ENCODE measurements at regions of chr14 and their contacts with region 1.

Region 1: GRCh38 chr14:34227834-34228649 is 234.0 kb downstream of the SPTSSA start:
- DNase-seq: peak; percentile 66
- H3K4me3 ChIP-seq: no peak overlapping the region
- H3K27ac ChIP-seq: no peak overlapping the region
- H3K4me1 ChIP-seq: no peaks in the 10 kb centered on the region
- H3K27me3 ChIP-seq: peaks cover 6% of the 10 kb centered on the region
- CTCF ChIP-seq: peak; percentile 84

Region 2: DNA sequence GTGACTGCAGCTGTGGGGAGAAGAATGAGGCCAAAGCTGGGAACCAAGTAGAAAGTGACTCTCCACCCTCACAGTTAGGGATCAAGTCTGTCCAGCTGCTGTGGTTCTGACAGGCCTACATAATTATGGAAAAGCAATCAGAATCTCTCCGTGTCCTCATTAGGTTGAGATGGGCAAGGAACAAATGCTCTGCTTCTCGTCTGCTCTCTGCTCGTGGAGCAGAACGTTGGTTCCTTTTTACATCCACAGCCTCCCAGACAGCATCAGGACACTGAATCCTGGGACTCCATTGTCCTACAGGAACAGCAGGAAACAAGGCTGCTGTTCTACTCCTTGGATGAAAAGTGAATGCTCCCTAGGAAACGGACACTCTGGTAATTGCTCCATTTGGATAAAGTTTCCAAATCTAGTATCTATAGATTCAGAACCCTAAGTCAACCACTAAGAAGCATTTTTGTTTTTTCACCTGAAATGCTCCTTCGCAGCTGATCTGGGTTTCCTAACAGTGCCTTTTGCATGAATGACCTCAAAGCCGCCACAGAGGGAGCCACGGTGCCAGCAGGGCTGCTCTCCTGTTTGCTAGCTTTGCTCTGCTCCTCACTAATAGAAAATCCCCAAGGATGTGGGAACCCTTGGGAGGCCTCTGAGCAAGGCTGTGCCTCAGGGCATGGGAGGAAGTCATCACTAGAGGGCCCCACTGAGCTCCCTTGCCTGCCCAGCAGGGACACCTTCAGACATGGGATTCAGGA is 379.2 kb before region 1 on chr14:
- CTCF ChIA-PET with region 1: interaction called, 6 read pairs
- POLR2A ChIA-PET with region 1: no interaction called
- intact Hi-C with region 1: loop called (anchors 2 kb)
- DNase-seq: peak; percentile 80
- H3K4me3 ChIP-seq: no peak overlapping the region
- H3K27ac ChIP-seq: no peak overlapping the region
- H3K4me1 ChIP-seq: no peaks in the 10 kb centered on the region
- H3K27me3 ChIP-seq: no peaks in the 10 kb centered on the region
- CTCF ChIP-seq: peak; percentile 88

Region 3: GRCh38 chr14:34098045-34098984 is 129.7 kb before region 1 on chr14:
- CTCF ChIA-PET with region 1: no interaction called
- POLR2A ChIA-PET with region 1: no interaction called
- intact Hi-C with region 1: no loop called
- DNase-seq: peak; percentile 40
- H3K4me3 ChIP-seq: no peak overlapping the region
- H3K27ac ChIP-seq: no peak overlapping the region
- H3K4me1 ChIP-seq: no peaks in the 10 kb centered on the region
- H3K27me3 ChIP-seq: no peaks in the 10 kb centered on the region
- CTCF ChIP-seq: peak; percentile 70